Motor neuron (in vitro differentiated cells): ENCODE measurements at regions of chr5 and their contacts with region 1.

Region 1: DNA sequence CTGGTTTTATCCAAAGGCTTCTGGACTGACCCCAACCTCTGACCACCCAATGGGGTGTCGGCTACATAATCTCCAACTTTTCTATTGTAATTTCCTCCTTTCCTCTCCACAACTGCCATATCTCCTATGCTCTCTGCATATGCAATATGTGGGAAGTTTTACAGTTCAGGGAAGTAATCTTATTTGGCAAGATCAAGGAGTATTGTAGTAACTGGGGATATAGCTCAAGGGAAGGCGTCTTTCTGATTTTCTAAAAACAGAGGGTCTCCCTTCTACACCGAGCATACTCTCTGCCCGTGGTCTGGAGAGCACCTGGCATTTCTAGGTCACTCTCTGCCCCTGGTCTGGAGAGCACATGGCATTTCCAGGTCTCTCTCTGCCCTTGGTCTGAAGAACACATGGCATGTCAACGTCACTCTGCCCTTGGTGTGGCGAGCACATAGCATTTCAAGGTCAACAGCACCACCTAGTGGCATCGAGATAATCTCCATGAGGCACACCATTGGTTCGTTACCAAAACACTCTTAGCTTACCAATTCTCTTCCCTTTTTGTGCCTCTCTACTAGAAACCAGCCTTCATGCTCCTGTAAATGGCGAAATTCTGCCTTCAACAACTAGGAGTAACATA is 616.4 kb upstream of the NUDT12 start:
- ATAC-seq: peak in 3 of 8 experiments; percentile 82 to 98 (median 97)
- H3K4me3 ChIP-seq: no peak overlapping the region
- H3K27ac ChIP-seq: no peak overlapping the region
- H3K4me1 ChIP-seq: no peaks in the 10 kb centered on the region

Region 2: GRCh38 chr5:103582364-103582763 is 596.6 kb before region 1 on chr5:
- in situ Hi-C with region 1: loop called in 1 of 9 experiments (anchors 25 kb)
- ATAC-seq: peak in 3 of 8 experiments; percentile 37 to 56 (median 37)
- H3K4me3 ChIP-seq: no peak overlapping the region
- H3K27ac ChIP-seq: no peak overlapping the region
- H3K4me1 ChIP-seq: peaks cover 2% of the 10 kb centered on the region in 2 donors